Lower leg skin (tissue), 4 donors: ENCODE measurements at regions of chr20 and their contacts with region 1.

Region 1: DNA sequence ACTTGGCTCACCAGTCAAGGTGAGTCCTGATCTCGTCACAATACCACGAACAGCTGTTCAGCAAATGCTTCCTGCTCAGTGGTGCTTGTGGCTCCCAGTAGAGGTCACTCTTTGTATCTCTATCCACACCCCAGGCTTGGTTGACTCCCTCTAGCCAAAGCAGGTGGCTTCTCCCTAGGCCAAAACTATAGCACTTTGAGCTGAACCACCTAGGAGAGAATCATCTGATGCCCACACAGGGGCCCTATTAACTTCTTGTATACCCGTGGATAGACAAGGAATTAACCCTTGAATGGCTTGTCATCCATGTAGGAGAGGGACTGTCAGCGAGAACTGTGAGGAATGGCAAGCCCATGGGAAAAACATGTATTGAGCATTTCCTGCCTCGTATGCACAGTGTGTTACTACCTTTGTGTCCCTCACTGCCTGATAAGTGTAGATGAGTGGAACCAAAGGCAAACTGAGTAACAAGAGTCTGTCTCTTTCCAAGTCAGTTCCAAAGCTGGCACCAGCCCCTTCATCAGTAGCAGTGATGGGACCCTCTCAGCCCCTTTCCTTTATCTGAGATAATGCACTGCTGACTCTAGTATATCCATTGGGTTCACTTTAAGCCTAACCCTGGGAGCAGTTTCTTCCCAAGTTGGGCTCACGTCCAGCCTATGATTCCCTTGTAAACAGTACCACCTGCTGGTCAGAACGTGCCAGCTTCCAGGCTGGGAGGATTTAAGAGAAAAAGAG is 42.5 kb downstream of the EIF2S2 start:
- DNase-seq: peak; percentile 74 to 93
- H3K4me3 ChIP-seq: no peak overlapping the region
- CTCF ChIP-seq: peak in 1 of 3 donors; percentile 78
- POLR2A ChIP-seq: no peak

Region 2: DNA sequence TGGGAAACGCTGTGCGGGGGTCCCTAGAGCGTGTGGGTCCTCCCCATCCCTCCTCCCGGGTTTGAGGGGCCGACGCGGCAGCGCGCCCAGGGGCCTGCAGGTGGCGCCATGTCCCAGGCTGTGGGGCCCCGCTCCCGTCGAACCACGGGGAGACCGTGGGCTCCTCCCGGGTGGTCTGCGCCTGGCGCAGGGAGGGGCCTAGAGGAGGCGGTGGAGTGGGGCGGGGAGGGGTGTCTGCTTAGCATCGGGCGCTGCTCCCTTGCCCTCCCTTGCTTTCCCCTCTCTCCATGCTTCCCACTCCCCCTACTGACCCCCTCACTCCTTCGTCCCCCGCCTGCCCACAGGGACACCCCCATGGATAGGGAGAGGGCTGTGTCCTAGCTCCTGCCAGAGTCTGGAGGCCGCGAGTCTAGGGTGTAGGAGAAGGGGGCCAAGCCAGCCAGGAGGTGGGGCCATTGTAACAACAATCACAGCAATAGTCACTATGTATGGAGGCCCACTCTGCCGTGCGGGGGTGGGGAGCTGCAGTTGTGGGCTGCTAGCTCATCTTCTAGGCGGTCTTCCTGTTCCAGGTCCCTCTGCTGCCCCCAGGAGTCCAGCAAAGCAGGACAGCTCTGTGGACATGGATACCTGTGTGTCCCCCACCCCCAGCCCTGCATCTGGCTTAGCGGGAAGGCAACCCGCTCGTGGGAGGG is 206.7 kb before region 1 on chr20:
- intact Hi-C with region 1: no loop called
- DNase-seq: peak in 1 of 2 donors; percentile 86
- H3K4me3 ChIP-seq: no peak overlapping the region
- CTCF ChIP-seq: no peak
- POLR2A ChIP-seq: no peak

Region 3: GRCh38 chr20:33947709-33948295 is 121.7 kb before region 1 on chr20:
- intact Hi-C with region 1: loop called (anchors 10 kb)
- DNase-seq: no peak
- H3K4me3 ChIP-seq: no peak overlapping the region
- CTCF ChIP-seq: peak in 1 of 3 donors; percentile 30
- POLR2A ChIP-seq: no peak

Region 4: GRCh38 chr20:33992923-33993575 is 76.5 kb before region 1 on chr20:
- intact Hi-C with region 1: no loop called
- DNase-seq: peak; percentile 99 to 100
- H3K4me3 ChIP-seq: peak overlapping the region; percentile 77
- CTCF ChIP-seq: no peak
- POLR2A ChIP-seq: no peak